ENCODE measurements at regions of chr4 and their contacts with region 1.

Region 1: GRCh38 chr4:90293320-90293719 is 166.1 kb downstream of the CCSER1 start:
- DNase-seq: no peak
- ATAC-seq: no peak
- H3K4me3 Mint-ChIP-seq: no peak overlapping the region
- H3K27ac Mint-ChIP-seq: no peak overlapping the region
- H3K4me1 Mint-ChIP-seq: no peaks in the 10 kb centered on the region
- H3K27me3 Mint-ChIP-seq: no peaks in the 10 kb centered on the region

Region 2: GRCh38 chr4:89482248-89482647 is 811.1 kb before region 1 on chr4:
- CTCF ChIA-PET with region 1: no interaction called
- POLR2A ChIA-PET with region 1: no interaction called
- intact Hi-C with region 1: loop called in 1 of 2 experiments (anchors 5 kb)
- DNase-seq: no peak
- ATAC-seq: peak; percentile 80
- H3K4me3 Mint-ChIP-seq: no peak overlapping the region
- H3K27ac Mint-ChIP-seq: no peak overlapping the region
- H3K4me1 Mint-ChIP-seq: peaks cover 4% of the 10 kb centered on the region
- H3K27me3 Mint-ChIP-seq: peaks cover 3% of the 10 kb centered on the region

Region 3: GRCh38 chr4:89914609-89915550 is 378.4 kb before region 1 on chr4:
- CTCF ChIA-PET with region 1: interaction called, 4 read pairs
- POLR2A ChIA-PET with region 1: no interaction called
- intact Hi-C with region 1: loop called in 1 of 2 experiments (anchors 2 kb)
- DNase-seq: no peak
- ATAC-seq: no peak
- H3K4me3 Mint-ChIP-seq: no peak overlapping the region
- H3K27ac Mint-ChIP-seq: no peak overlapping the region
- H3K4me1 Mint-ChIP-seq: no peaks in the 10 kb centered on the region
- H3K27me3 Mint-ChIP-seq: no peaks in the 10 kb centered on the region

Region 4: GRCh38 chr4:89949782-89950387 is 343.4 kb before region 1 on chr4:
- CTCF ChIA-PET with region 1: no interaction called
- POLR2A ChIA-PET with region 1: no interaction called
- intact Hi-C with region 1: loop called in 1 of 2 experiments (anchors 10 kb)
- DNase-seq: no peak
- ATAC-seq: no peak
- H3K4me3 Mint-ChIP-seq: no peak overlapping the region
- H3K27ac Mint-ChIP-seq: no peak overlapping the region
- H3K4me1 Mint-ChIP-seq: no peaks in the 10 kb centered on the region
- H3K27me3 Mint-ChIP-seq: no peaks in the 10 kb centered on the region

Region 5: GRCh38 chr4:90024519-90024918 is 268.8 kb before region 1 on chr4:
- CTCF ChIA-PET with region 1: no interaction called
- POLR2A ChIA-PET with region 1: no interaction called
- intact Hi-C with region 1: loop called in 1 of 2 experiments (anchors 5 kb)
- DNase-seq: no peak
- ATAC-seq: no peak
- H3K4me3 Mint-ChIP-seq: no peak overlapping the region
- H3K27ac Mint-ChIP-seq: no peak overlapping the region
- H3K4me1 Mint-ChIP-seq: no peaks in the 10 kb centered on the region
- H3K27me3 Mint-ChIP-seq: peaks cover 3% of the 10 kb centered on the region

Region 6: DNA sequence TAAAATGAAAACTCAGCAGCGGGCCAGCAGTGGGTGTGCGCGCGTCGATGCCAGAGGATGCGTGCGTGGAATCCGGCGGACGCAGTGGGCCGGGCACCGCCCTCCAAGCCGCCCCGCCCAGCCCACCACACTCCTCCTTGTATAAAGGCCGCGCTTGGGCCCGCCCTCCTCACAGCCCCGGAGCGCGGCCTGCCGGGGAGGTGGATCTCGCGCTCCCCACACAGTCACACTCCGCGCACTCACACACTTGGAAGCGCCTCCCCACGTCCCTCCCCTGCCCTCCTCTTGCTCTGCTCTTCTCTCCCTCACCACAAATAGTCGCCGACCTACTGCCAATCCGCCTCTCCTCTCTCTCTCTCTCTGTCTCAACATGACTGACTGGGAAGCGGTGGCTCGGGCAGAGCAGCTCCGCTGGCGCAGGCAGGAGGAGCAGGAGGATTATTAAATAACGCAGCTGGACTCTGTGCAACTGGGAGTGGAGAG is 166.1 kb before region 1 on chr4 and contains the start of gene CCSER1:
- CTCF ChIA-PET with region 1: no interaction called
- POLR2A ChIA-PET with region 1: no interaction called
- intact Hi-C with region 1: loop called in 1 of 2 experiments (anchors 5 kb)
- DNase-seq: peak; percentile 61
- ATAC-seq: peak; percentile 90
- H3K4me3 Mint-ChIP-seq: peak within 1 kb of the TSS; percentile 76
- H3K27ac Mint-ChIP-seq: peak within 1 kb of the TSS; percentile 32
- H3K4me1 Mint-ChIP-seq: peaks cover 16% of the 10 kb centered on the region
- H3K27me3 Mint-ChIP-seq: peaks cover 40% of the 10 kb centered on the region
- total RNA-seq, gene CCSER1: 0.14 TPM in 1 of 2 experiments, not detected in the other

Measured in activated CD4-positive, alpha-beta T cell treated with anti-CD3 and anti-CD28 coated beads for 36 hours (primary cell).